HEK293 (cell line): ENCODE measurements at regions of chr12 and their contacts with region 1.

Region 1: GRCh38 chr12:6323340-6323994 is 13.0 kb downstream of the PLEKHG6 start:
- H3K4me3 ChIP-seq: no peak overlapping the region
- H3K27ac ChIP-seq: peak overlapping the region; percentile 55
- H3K4me1 ChIP-seq: peaks cover 11% of the 10 kb centered on the region
- CTCF ChIP-seq: peak; percentile 75

Region 2: GRCh38 chr12:6069437-6070107 is 253.9 kb before region 1 on chr12:
- CTCF ChIA-PET with region 1: no interaction called
- POLR2A ChIA-PET with region 1: no interaction called
- H3K4me3 ChIP-seq: no peak overlapping the region
- H3K27ac ChIP-seq: no peak overlapping the region
- H3K4me1 ChIP-seq: no peaks in the 10 kb centered on the region
- CTCF ChIP-seq: no peak

Region 3: DNA sequence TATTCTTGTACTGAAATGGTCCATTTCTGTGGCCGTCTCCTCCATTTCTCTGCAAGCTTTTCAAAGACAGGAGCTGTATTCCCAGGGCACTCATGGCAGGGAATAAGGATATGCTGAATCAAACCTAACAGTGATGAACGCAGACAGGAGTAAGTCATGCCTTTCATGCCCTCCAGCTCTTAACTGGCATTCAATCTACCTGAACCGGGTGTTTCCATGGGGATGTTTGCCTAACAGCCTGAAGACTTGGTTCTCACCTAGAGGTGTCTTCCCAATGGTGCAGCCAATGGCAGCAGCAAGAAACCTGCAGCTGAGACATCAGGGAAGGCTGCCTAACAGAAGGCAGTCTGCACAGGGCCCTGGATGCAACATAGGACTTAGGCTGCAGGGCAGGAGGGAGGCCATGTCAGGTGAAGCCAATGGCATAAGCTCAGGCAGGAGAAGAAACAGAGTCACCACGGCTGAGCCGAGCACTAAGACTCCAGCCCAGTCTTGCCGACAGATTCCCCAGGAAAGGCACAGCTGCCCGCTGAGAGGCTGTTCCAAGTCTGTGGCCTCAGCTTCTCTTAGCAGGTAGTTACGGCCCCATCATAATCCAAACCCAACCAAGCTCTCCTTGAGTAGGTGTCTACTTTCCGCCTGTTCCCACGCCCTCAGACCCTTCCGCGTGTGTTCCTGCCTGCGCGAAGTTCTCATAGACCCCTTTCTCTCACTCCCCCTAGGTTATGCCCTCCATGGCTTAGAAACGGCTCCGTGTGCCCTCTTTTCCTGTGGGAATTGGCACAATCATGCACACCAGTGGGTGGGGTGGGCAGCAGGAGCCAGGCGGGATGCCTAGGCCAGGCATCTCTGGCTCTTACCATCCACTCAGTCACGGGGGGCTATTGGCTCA is 243.1 kb before region 1 on chr12:
- CTCF ChIA-PET with region 1: no interaction called
- POLR2A ChIA-PET with region 1: no interaction called
- H3K4me3 ChIP-seq: no peak overlapping the region
- H3K27ac ChIP-seq: no peak overlapping the region
- H3K4me1 ChIP-seq: no peaks in the 10 kb centered on the region; the same call in 1 of the 2 replicates
- CTCF ChIP-seq: no peak

Region 4: GRCh38 chr12:6335451-6336078 is 12.1 kb after region 1 on chr12:
- CTCF ChIA-PET with region 1: interaction called, 27 read pairs
- POLR2A ChIA-PET with region 1: interaction called, 16 read pairs
- H3K4me3 ChIP-seq: peak overlapping the region; percentile 28
- H3K27ac ChIP-seq: peak overlapping the region; percentile 90
- H3K4me1 ChIP-seq: peaks cover 27% of the 10 kb centered on the region
- CTCF ChIP-seq: peak; percentile 77

Region 5: DNA sequence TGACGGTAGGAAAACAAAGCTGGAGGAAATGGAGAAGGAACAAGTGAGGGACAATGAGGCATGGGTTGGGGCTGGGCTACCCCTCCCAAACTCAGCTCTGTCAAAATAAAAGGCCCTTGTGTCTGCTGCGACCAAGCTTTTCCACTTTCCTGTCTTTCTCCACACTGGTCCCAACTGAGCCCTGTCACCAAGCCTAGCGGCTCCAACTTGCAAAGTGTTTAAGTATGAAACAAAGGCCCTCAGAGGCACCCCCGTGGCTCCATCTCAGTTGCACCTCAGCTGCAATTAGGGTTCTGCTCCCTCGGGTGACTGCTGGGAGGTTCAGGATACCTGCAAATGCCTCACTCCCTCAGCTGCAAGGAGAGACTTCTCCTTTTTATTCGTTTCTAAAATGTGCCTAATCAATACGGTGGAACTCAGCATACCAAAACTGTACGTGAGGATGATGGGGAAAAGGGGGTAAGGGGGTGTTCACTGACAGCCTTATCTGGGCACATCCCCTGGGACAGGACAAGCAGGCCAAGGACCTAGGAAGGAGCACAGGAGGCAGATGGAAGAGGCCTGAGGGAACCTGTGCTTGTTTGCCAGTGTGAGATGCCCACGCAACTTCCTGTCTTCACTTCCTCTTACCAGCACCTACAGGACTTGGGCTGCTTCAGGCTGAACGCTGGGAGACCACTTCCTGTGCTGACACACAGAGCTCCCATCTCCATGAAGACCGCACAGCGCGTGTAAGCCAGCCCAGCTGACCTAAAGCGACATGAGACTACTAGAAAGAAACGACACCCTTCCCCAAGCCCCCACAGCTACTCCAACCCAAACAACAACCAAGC is 138.2 kb after region 1 on chr12:
- CTCF ChIA-PET with region 1: interaction called, 51 read pairs
- POLR2A ChIA-PET with region 1: interaction called, 13 read pairs
- H3K4me3 ChIP-seq: no peak overlapping the region
- H3K27ac ChIP-seq: no peak overlapping the region
- H3K4me1 ChIP-seq: no peaks in the 10 kb centered on the region
- CTCF ChIP-seq: no peak

Region 6: DNA sequence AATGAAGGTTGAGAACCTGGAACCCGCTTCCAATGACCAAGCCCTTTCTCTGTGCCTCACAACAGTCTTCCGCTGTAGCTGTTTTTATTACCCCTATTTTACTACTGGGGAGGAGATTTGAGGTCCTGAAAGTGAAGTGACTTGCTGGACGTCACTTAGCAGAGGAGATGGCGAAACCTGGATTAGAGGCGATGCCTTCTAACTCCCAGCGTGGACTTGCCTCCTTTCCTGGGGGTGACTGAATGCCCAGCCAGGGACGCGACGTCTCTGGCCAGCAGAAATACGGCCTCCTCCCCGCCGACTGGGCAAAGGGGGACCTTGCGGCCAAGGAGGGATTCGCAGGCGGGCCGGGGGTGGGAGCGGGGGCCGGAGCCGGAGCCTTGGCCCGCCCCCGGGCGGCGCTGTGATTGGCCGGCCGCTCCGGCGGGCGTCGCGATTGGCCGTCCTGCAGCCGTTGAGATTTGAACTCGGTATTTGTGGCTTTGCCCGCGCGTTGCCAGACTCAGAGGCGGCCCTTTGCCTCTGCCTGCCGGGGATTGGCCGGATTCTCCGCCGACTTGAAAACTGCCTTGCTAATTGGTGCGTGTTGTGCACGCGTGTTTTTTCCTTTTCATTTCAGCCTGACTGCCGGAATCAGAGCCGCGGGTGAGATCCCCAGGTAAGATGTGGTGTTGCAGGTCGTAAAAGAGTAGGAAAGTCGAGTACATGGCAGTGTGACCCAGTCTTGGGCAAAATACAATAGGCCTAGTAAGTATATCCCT is 170.2 kb after region 1 on chr12 and contains the start of gene NCAPD2:
- CTCF ChIA-PET with region 1: interaction called, 10 read pairs
- POLR2A ChIA-PET with region 1: interaction called, 3 read pairs
- H3K4me3 ChIP-seq: peak within 1 kb of the TSS; percentile 93
- H3K27ac ChIP-seq: peak within 1 kb of the TSS; percentile 94
- H3K4me1 ChIP-seq: peaks cover 7% of the 10 kb centered on the region; the same call in 1 of the 2 replicates
- CTCF ChIP-seq: peak; percentile 55; the same call in 1 of the 2 replicates